ENCODE measurements at regions of chr12 and their contacts with region 1.

Region 1: DNA sequence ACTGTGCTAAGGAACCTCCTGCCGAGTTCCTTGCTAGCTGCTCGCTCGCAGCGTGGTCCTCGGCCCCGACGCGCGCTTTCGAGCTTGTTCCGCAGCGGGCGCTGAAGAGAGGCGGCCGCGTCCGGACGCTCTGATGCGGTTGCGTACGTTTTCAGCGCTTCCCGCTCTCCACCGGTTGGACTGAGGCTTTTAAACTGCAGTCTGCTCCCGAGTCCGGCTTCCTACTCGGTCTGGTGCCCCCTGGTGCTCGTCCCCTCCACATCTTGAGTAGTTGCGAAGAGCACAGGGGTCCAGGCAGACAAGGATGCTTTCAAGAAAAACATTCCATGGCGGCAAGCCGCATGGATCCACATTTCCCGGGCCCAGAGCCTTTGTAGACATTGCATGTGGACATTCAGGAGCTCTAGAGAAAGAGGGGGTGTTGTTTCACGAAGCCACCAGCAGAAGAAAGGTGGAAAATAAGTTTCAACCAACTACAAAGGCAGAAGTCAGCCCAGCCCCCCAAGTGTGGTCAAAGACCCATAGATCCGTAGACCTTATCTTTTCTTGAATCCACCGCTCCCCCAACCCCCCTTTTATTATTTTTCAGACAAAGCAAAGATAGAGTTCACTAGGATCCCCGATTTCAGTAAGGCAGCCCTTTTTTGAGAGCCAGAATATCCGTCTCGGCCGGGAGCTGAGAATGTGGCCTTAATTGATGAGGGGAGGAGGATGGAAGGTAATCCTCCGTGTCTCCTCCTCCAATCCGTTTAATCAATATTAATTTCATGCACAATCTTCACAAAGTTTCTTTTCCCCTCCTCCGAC is 984 bp upstream of the WNK1 start:
- DNase-seq: peak; percentile 93 to 95
- ATAC-seq: peak; percentile 63 to 75 (median 73)
- H3K4me3 ChIP-seq: peak overlapping the region; percentile 96
- H3K27ac ChIP-seq: peak overlapping the region; percentile 95
- H3K4me1 ChIP-seq: peaks cover 23% of the 10 kb centered on the region
- H3K27me3 ChIP-seq: no peaks in the 10 kb centered on the region
- CTCF ChIP-seq: peak; percentile 75

Region 2: DNA sequence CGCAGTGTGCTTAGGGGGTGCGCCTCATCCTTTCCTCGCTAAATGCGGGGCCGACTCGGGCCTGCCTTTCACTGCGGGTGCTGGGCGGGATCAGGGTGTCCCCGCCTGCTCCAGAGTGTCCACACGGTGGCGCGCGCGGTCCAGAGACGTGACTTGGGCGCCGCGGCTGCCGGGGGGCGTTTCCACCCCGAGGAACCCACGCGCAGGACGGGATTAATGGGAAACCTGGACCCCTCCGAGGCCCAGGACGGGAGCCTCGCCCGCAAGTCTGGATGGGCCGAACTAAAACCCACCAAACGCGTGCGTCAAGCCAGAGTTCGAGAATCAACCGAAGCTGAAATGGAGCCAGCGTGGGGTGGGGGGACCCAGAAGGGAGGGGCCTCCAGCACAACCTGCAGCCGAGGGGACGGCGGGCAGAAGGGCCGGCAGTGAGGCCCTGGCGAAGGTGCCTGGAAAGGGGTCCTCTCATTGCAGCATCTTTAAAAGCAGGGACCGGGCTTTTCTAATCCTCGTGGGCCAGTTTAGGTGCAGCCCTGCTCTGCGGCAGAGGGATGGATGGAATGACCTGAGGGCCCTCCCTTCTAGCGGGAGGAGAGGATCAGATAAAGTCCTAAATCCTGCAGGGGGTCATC is 181.5 kb before region 1 on chr12:
- intact Hi-C with region 1: loop called (anchors 1 to 2 kb)
- DNase-seq: peak; percentile 93 to 94
- ATAC-seq: peak; percentile 68 to 83 (median 78)
- H3K4me3 ChIP-seq: peak overlapping the region; percentile 79
- H3K27ac ChIP-seq: peak overlapping the region; percentile 95
- H3K4me1 ChIP-seq: peaks cover 17% of the 10 kb centered on the region
- H3K27me3 ChIP-seq: no peaks in the 10 kb centered on the region
- CTCF ChIP-seq: peak; percentile 97

Region 3: GRCh38 chr12:642633-643474 is 108.5 kb before region 1 on chr12:
- intact Hi-C with region 1: loop called (anchors 1 to 5 kb)
- DNase-seq: peak; percentile 88 to 89
- ATAC-seq: peak; percentile 51 to 81 (median 62)
- H3K4me3 ChIP-seq: peak overlapping the region; percentile 87
- H3K27ac ChIP-seq: peak overlapping the region; percentile 100
- H3K4me1 ChIP-seq: peaks cover 69% of the 10 kb centered on the region
- H3K27me3 ChIP-seq: no peaks in the 10 kb centered on the region
- CTCF ChIP-seq: peak; percentile 31

Region 4: GRCh38 chr12:716506-716905 is 34.9 kb before region 1 on chr12:
- intact Hi-C with region 1: loop called in 1 of 2 experiments (anchors 5 kb)
- DNase-seq: no peak
- ATAC-seq: peak; percentile 51 to 74 (median 68)
- H3K4me3 ChIP-seq: no peak overlapping the region
- H3K27ac ChIP-seq: peak overlapping the region; percentile 92
- H3K4me1 ChIP-seq: peaks cover 21% of the 10 kb centered on the region
- H3K27me3 ChIP-seq: no peaks in the 10 kb centered on the region
- CTCF ChIP-seq: no peak

Region 5: DNA sequence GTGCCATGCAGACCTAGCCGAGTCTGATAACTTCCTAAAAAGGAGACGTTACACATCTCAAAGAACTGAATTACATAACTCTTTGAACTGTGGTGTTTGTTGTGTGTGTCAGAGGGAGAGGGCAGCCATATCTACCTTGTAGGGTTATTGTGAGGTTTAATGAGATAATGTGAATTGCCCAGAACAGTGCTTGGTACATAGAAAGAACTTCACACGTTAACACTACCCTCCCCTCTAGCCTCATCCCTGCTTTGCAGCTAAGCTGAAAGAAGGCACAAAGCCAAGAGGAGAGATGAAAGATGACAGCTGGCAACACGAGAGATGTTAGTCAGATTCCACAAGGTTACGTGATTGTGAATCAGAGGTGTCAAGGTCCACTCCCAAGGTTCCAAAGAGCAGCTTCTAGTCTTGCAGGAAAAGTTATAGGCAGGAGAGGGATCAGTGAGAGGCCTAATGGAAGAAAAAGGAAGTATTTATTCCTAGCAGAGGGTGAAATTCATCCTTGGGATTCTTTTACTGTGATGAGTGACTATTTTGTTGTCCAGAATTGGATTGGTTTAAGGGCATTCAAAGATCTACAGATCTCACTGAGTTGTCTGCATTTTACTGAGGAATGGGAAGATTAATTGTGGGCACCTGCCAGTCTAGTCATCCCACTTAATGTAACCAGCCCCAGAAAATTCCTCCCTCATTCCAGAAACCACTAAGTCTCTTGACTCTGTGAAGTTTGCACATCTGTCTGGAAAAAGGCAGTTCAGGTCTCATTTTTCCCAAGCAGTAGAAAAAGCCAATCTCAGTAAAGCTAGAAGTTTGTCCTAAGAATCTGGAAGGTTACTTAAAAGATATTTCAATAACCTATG is 24.9 kb before region 1 on chr12:
- intact Hi-C with region 1: loop called in 1 of 2 experiments (anchors 2 kb)
- DNase-seq: no peak
- ATAC-seq: peak; percentile 76 to 89 (median 88)
- H3K4me3 ChIP-seq: no peak overlapping the region
- H3K27ac ChIP-seq: peak overlapping the region; percentile 60
- H3K4me1 ChIP-seq: no peaks in the 10 kb centered on the region
- H3K27me3 ChIP-seq: no peaks in the 10 kb centered on the region
- CTCF ChIP-seq: no peak

Region 6: DNA sequence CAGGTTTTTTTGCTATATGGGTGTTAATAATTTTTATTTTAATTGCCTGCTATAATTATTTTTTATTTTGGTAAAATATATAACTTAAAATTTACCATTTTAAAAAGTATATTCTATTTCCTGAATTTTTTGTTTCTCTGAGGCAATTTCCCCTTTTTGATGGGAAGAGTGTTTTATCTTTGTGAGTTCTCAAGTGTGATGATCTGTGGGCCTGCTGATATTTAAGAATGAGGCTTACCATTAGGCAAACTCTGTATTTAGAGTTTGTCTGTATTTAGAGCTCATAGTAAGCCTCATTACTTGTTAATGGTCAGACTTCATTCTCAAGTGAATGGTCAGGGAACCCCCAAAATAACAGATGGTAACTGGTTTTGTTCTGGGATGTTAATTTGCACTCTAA is 49.0 kb after region 1 on chr12:
- intact Hi-C with region 1: no loop called
- DNase-seq: no peak
- ATAC-seq: no peak
- H3K4me3 ChIP-seq: no peak overlapping the region
- H3K27ac ChIP-seq: no peak overlapping the region
- H3K4me1 ChIP-seq: peaks cover 59% of the 10 kb centered on the region
- H3K27me3 ChIP-seq: no peaks in the 10 kb centered on the region
- CTCF ChIP-seq: no peak

Region 7: GRCh38 chr12:810671-811415 is 59.4 kb after region 1 on chr12:
- intact Hi-C with region 1: loop called in 1 of 2 experiments (anchors 5 kb)
- DNase-seq: no peak
- ATAC-seq: no peak
- H3K4me3 ChIP-seq: no peak overlapping the region
- H3K27ac ChIP-seq: peak overlapping the region; percentile 12
- H3K4me1 ChIP-seq: peaks cover 36% of the 10 kb centered on the region
- H3K27me3 ChIP-seq: no peaks in the 10 kb centered on the region
- CTCF ChIP-seq: no peak

Region 8: DNA sequence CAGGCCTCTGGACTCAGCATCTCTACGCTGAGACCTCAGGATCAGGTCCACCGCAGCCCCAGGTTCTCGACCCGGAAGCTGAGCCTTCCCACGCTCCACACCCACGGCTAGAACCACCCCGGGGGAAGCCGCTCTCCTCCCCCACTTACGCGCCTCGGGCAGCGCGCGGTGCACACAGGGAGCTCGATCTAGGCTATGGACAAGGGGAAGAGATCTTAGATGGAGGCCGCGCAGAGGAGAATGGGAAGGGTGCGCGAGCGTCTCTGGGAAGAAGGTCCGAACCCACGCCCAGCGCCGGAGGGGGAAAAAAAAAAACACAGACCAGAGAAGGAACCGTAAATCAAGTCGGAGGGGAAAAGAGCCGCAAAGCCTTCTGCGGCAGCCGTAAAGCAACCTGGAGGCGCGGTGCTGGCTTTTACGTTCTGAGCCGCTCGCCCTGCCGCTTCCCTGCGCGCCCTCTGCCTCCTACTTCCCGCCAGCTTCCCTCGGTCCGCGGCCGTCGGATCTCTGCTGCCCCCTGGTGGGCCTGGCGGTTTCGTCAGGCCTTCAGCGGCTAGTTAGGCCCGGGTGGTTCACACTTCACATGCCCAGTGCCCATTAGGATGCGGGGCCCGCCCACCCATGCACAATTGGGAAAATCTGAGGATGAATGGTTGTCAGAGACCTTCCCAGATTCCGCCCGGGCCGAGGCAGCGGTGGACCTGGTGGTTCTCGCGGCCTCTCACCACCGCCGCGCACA is 198.2 kb after region 1 on chr12 and contains the start of gene RAD52:
- intact Hi-C with region 1: loop called in 1 of 2 experiments (anchors 10 kb)
- DNase-seq: peak; percentile 98 to 99
- ATAC-seq: peak; percentile 93 to 94 (median 94)
- H3K4me3 ChIP-seq: peak within 1 kb of the TSS; percentile 95
- H3K27ac ChIP-seq: peak within 1 kb of the TSS; percentile 97
- H3K4me1 ChIP-seq: peaks cover 21% of the 10 kb centered on the region
- H3K27me3 ChIP-seq: no peaks in the 10 kb centered on the region
- CTCF ChIP-seq: peak; percentile 99
- total RNA-seq, gene RAD52: 6.7 to 12.8 (median 9.2) TPM